ENCODE measurements at regions of chr6 and their contacts with region 1.

Region 1: DNA sequence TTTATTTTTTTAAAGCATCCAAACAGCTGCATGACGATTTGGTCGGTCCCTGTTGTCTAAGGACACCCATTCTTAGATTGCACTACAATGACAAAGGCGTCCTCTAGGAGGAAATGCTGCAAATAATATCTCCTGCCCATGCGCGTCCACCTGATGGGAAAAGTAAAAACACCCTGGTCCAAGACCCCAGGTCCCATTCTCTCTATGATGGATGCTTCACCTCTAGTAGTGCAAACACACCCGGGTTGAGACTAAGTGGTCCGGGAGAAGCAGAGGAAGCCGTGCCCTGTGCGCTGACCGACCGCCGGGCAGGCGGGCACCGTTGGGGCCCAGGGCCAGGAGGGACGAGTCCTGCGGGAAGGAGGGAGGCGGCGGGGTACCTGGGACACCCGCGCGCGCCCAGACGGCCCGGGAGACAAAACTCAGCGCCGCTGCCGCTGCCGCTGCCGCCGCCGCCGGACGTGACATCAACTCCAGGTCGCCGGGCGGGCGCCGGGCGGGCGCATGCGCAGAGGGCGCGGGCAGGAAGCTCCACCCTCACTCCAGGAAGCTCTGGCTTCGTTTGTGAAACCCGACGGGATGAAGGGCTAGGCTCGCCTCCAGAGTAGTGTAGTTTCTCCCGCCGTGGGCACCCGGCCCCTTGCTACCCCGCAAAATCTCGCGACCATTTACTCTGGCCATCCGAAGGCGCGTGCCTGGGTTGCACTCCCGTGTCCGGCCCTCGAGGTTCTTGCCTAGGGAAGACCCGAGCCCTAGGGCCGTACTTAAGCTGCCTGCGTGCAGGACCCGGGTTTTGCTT is at the start of gene TBC1D7:
- DNase-seq: peak; percentile 91
- H3K4me3 ChIP-seq: peak within 1 kb of the TSS; percentile 89
- H3K27ac ChIP-seq: peak within 1 kb of the TSS; percentile 61
- H3K4me1 ChIP-seq: peaks cover 30% of the 10 kb centered on the region
- CTCF ChIP-seq: no peak
- total RNA-seq, gene TBC1D7: 52.9 and 69.2 TPM in 2 replicates

Region 2: GRCh38 chr6:13014504-13015378 is 313.5 kb before region 1 on chr6:
- CTCF ChIA-PET with region 1: no interaction called
- POLR2A ChIA-PET with region 1: no interaction called
- intact Hi-C with region 1: loop called (anchors 5 kb)
- DNase-seq: no peak
- H3K4me3 ChIP-seq: no peak overlapping the region
- H3K27ac ChIP-seq: no peak overlapping the region
- H3K4me1 ChIP-seq: no peaks in the 10 kb centered on the region
- CTCF ChIP-seq: no peak

Region 3: DNA sequence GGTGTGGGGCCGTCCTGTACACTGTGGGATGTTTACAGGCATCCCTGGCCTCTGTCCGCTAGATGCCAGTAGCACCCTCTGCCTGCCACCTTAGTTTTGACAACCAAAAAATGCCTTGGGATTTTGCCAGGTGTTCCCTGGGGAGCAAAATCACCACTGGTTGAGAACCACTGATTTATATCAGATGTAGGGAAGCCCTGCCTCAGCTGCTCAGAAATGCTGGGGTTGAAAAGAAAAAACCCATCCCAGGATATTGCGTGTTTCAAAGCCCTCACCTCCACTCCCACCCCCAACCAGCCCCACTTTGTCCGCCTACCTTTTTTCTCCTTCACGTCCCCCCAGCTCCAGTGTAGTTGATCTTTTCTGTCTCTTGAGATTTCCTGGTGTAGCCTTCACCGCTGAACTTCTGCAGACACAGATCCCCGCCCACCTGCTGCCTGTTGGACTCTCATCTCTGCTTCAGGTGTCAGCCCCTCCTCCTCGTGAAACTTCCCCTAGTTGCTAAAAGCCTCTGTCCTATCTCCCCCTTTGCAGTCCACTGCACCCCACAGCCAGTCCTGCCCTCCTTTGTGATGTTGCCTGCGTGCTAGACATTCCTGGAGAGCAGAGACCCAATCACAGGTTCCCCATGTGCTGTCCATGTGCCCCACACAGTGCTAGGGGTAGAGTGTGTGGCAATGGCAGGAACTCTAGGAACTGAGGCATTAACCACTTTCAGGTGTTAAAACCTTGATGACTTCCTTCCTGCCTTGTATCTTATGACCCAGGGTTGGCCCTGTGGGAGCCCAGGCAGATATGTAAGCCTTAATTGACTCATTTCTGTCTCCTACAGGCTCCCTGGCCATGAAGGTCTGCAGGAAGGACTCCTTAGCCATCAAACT is 98.8 kb before region 1 on chr6:
- CTCF ChIA-PET with region 1: interaction called, 3 read pairs
- POLR2A ChIA-PET with region 1: interaction called, 7 read pairs
- intact Hi-C with region 1: loop called (anchors 1 kb)
- DNase-seq: peak; percentile 63
- H3K4me3 ChIP-seq: peak overlapping the region; percentile 2
- H3K27ac ChIP-seq: no peak overlapping the region
- H3K4me1 ChIP-seq: peaks cover 10% of the 10 kb centered on the region
- CTCF ChIP-seq: peak; percentile 75

Region 4: DNA sequence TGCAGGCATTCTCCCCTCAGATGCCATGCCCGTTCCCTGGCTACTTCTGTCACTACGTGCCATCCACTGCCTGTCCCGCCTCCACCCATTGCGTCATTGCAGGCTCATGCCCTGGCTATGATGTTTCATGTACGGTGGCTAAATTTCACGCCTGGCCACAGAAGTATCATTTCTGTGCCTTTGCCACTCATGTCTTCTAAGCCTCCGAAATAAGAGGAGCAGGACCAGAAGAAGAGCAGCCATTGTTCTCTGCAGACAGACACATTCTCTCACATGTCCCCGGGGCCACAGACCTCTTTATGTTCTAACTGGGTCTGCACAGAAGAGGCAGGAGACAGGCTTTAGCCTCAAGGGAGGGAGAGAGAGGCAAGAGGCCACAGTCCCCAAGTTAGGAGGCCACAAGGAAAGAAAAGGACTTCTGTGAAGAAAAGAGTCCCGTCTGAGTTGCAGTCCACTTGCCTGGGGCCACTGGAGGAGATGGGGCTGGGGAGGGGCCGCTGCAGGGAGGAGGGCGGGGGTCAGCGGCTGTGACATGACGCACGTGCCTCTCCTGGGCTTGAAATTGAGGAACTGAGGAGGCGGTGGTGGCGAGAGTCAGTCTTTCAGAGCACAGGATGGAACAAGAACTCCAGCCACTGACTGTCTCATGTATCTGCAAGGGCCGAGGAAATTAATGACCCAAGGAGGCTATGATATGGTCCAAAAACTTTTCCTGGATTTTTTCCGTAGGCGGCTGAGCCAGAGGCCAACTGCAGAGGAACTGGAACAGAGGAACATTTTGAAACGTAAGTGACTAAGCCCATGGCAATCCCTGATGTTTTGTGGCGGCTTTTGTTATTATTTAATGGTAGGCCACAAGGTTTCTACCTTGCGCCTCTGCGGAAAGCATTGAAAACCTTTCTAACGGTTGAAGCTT is 55.9 kb before region 1 on chr6:
- CTCF ChIA-PET with region 1: no interaction called
- POLR2A ChIA-PET with region 1: interaction called, 26 read pairs
- intact Hi-C with region 1: loop called (anchors 2 kb)
- DNase-seq: peak; percentile 84
- H3K4me3 ChIP-seq: peak overlapping the region; percentile 71
- H3K27ac ChIP-seq: peak overlapping the region; percentile 65
- H3K4me1 ChIP-seq: peaks cover 68% of the 10 kb centered on the region
- CTCF ChIP-seq: peak; percentile 52; the same call in 1 of the 2 replicates

Region 5: GRCh38 chr6:13296536-13296997 is 31.7 kb before region 1 on chr6:
- CTCF ChIA-PET with region 1: no interaction called
- POLR2A ChIA-PET with region 1: interaction called, 43 read pairs
- intact Hi-C with region 1: loop called (anchors 1 kb)
- DNase-seq: peak; percentile 92
- H3K4me3 ChIP-seq: peak overlapping the region; percentile 33
- H3K27ac ChIP-seq: peak overlapping the region; percentile 71
- H3K4me1 ChIP-seq: peaks cover 69% of the 10 kb centered on the region
- CTCF ChIP-seq: peak; percentile 58

Region 6: DNA sequence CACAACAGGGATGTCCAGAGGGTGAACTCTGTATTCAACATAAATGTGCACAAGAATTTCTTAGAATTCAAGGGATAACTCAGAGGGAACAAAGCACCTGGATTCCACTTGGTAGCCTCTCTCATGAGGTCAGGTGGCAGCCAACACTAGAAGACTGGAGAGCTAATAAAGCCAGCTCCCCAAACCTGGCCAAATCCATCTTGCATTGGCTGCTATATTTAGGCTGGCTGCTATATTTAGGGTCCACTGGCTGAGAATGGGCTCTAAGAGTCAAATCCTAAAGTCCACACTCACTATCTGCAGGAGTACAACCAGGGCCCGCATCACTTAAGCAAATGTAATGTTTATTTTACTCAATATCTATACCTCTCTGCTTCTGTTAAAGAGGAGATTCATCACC is 19.9 kb before region 1 on chr6:
- CTCF ChIA-PET with region 1: interaction called, 5 read pairs
- POLR2A ChIA-PET with region 1: interaction called, 43 read pairs
- intact Hi-C with region 1: loop called (anchors 2 kb)
- DNase-seq: no peak
- H3K4me3 ChIP-seq: no peak overlapping the region
- H3K27ac ChIP-seq: no peak overlapping the region
- H3K4me1 ChIP-seq: peaks cover 35% of the 10 kb centered on the region
- CTCF ChIP-seq: no peak

Region 7: DNA sequence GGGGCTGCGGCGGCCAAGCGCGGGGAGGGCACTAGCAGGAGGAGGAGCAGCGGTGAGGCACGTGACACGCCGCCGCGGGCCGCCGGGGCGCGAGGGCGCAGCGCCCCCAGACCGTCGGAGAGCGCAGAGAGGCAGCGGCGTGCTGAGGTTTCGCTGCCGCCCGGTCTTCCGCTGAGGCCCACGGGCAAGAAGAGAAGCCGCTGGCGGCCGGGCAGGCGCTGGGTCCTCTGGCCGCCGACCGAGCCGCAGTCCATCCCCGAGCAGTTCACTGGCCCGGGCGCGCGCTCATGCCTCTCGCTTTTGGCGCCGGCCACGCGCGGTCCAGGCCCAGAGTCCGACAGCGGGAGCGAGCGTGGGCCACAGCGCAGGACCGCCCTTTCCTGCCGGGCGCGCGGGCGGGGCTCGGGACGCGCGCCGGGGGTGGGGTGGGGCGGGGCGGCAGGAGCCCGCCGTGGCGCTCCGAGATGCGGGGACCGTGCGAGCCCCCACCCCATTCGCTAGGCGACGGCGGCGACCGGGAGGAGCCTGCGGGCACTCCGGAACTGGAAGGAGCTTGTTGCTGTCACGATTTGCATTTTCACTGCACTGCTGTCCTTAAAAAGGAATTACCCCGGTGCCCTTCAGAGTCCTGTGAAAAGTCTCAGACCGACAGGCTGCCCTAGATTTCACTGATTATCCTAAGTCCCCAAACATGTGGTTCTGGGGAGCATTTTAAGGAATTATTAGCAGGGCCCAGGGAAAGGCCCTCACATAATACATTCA is 486.1 kb after region 1 on chr6 and contains the start of gene MCUR1:
- CTCF ChIA-PET with region 1: no interaction called
- POLR2A ChIA-PET with region 1: no interaction called
- intact Hi-C with region 1: loop called (anchors 5 kb)
- DNase-seq: peak; percentile 94
- H3K4me3 ChIP-seq: peak within 1 kb of the TSS; percentile 86
- H3K27ac ChIP-seq: peak within 1 kb of the TSS; percentile 87
- H3K4me1 ChIP-seq: peaks cover 30% of the 10 kb centered on the region
- CTCF ChIP-seq: peak; percentile 38; the same call in 1 of the 2 replicates
- total RNA-seq, gene MCUR1: 11.9 and 17.3 TPM in 2 replicates